Endothelial cell of umbilical vein (primary cell): ENCODE measurements at regions of chr12 and their contacts with region 1.

Region 1: GRCh38 chr12:12916135-12916944 is 25.0 kb downstream of the GPRC5A start:
- DNase-seq: peak; percentile 97
- H3K4me3 ChIP-seq: peak overlapping the region in 1 of 3 experiments; percentile 15
- H3K27ac ChIP-seq: peak overlapping the region; percentile 88
- H3K4me1 ChIP-seq: peaks cover 36% of the 10 kb centered on the region
- H3K27me3 ChIP-seq: no peaks in the 10 kb centered on the region
- CTCF ChIP-seq: peak; percentile 96 to 97
- POLR2A ChIP-seq: peak; percentile 21

Region 2: GRCh38 chr12:12724661-12725545 is 191.4 kb before region 1 on chr12:
- CTCF ChIA-PET with region 1: no interaction called
- POLR2A ChIA-PET with region 1: no interaction called
- dilution Hi-C with region 1: no loop called
- intact Hi-C with region 1: loop called (anchors 5 kb)
- DNase-seq: peak; percentile 98
- H3K4me3 ChIP-seq: peak overlapping the region; percentile 13 to 97 (median 95)
- H3K27ac ChIP-seq: peak overlapping the region; percentile 98
- H3K4me1 ChIP-seq: peaks cover 38% of the 10 kb centered on the region
- H3K27me3 ChIP-seq: no peaks in the 10 kb centered on the region
- CTCF ChIP-seq: no peak
- POLR2A ChIP-seq: peak; percentile 75

Region 3: GRCh38 chr12:12872139-12872881 is 44.0 kb before region 1 on chr12:
- CTCF ChIA-PET with region 1: interaction called, 6 read pairs
- POLR2A ChIA-PET with region 1: no interaction called
- dilution Hi-C with region 1: no loop called
- intact Hi-C with region 1: loop called (anchors 1 kb)
- DNase-seq: peak; percentile 93
- H3K4me3 ChIP-seq: peak overlapping the region in 1 of 3 experiments; percentile 43
- H3K27ac ChIP-seq: peak overlapping the region; percentile 96
- H3K4me1 ChIP-seq: peaks cover 41% of the 10 kb centered on the region
- H3K27me3 ChIP-seq: no peaks in the 10 kb centered on the region
- CTCF ChIP-seq: no peak
- POLR2A ChIP-seq: peak; percentile 74

Region 4: DNA sequence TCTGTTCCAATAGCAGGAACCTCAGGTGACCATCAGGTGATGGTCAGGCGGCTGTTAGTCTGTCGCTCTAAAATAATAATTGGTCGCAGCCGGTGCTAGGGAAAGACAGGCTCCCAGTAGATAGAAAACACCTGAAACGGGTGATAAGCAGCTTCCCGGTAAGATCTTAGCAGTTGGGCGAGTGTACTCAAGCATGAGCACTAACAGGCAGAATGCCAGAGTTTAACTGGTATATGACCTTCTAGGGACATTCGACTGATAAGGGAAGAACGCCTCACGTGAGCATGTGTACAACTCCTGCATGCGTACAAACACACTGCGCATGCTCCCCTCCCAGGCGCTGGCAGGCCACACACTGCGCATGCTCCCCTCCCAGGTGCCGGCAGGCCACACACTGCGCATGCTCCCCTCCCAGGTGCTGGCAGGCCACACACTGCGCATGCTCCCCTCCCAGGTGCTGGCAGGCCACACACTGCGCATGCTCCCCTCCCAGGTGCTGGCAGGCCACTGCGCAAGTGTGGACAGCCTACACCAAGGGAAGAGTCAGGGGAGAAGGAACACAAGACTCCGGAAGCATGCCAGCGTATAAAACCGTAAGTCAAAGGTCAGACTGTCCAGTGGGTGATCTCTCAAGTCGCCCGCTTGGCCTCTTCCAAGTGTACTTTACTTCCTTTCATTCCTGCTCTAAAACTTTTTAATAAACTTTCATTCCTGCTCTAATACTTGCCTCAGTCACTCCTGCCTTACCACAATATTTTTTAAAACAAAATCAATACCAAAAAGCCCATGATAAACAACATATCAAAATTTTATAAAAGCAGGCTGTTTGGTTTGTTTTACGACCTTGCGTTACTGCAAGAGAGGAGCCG is 11.1 kb after region 1 on chr12:
- CTCF ChIA-PET with region 1: no interaction called
- POLR2A ChIA-PET with region 1: no interaction called
- dilution Hi-C with region 1: no loop called
- intact Hi-C with region 1: no loop called
- DNase-seq: peak; percentile 97
- H3K4me3 ChIP-seq: peak overlapping the region; percentile 49 to 81 (median 51)
- H3K27ac ChIP-seq: peak overlapping the region; percentile 61
- H3K4me1 ChIP-seq: peaks cover 5% of the 10 kb centered on the region
- H3K27me3 ChIP-seq: no peaks in the 10 kb centered on the region
- CTCF ChIP-seq: no peak
- POLR2A ChIP-seq: peak; percentile 78

Region 5: GRCh38 chr12:12975322-12976077 is 59.2 kb after region 1 on chr12:
- CTCF ChIA-PET with region 1: interaction called, 116 read pairs
- POLR2A ChIA-PET with region 1: interaction called, 3 read pairs
- dilution Hi-C with region 1: no loop called
- intact Hi-C with region 1: loop called (anchors 1 kb)
- DNase-seq: peak; percentile 69
- H3K4me3 ChIP-seq: no peak overlapping the region
- H3K27ac ChIP-seq: peak overlapping the region; percentile 49
- H3K4me1 ChIP-seq: peaks cover 37% of the 10 kb centered on the region
- H3K27me3 ChIP-seq: no peaks in the 10 kb centered on the region
- CTCF ChIP-seq: peak; percentile 55 to 61
- POLR2A ChIP-seq: no peak

Region 6: DNA sequence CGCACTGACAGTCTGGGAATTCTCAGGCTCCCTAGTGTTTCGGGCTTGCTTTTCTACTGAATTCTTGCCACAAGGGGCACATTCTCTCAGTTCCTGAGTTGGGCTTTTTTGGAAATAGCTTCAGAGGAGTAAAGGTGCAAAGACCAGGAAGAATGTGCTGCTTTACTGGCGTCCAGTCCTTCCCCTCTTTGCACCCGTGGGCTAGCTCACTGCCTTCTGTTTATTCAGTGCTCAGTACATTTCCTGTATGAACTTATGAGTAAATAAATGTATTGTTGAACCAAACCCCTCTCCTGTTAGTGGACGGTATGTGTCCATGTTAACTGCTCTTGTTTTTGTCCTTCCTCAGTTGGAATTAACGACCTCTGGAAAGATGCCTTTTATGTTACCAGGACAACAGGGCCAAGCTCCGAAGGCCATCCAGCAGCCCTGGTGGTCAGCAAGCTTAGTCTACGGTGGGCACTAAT is 163.1 kb after region 1 on chr12:
- CTCF ChIA-PET with region 1: interaction called, 7 read pairs
- POLR2A ChIA-PET with region 1: no interaction called
- dilution Hi-C with region 1: no loop called
- intact Hi-C with region 1: loop called (anchors 1 kb)
- DNase-seq: peak; percentile 98
- H3K4me3 ChIP-seq: no peak overlapping the region
- H3K27ac ChIP-seq: peak overlapping the region; percentile 69
- H3K4me1 ChIP-seq: peaks cover 12% of the 10 kb centered on the region
- H3K27me3 ChIP-seq: no peaks in the 10 kb centered on the region
- CTCF ChIP-seq: peak; percentile 64 to 76
- POLR2A ChIP-seq: no peak

Region 7: GRCh38 chr12:13203034-13203922 is 286.9 kb after region 1 on chr12:
- CTCF ChIA-PET with region 1: interaction called, 60 read pairs
- POLR2A ChIA-PET with region 1: no interaction called
- dilution Hi-C with region 1: no loop called
- intact Hi-C with region 1: loop called (anchors 1 kb)
- DNase-seq: peak; percentile 46
- H3K4me3 ChIP-seq: no peak overlapping the region
- H3K27ac ChIP-seq: peak overlapping the region; percentile 97
- H3K4me1 ChIP-seq: peaks cover 90% of the 10 kb centered on the region
- H3K27me3 ChIP-seq: no peaks in the 10 kb centered on the region
- CTCF ChIP-seq: peak; percentile 28 to 46
- POLR2A ChIP-seq: no peak

Region 8: GRCh38 chr12:13362260-13362841 is 446.0 kb after region 1 on chr12:
- CTCF ChIA-PET with region 1: no interaction called
- POLR2A ChIA-PET with region 1: no interaction called
- dilution Hi-C with region 1: no loop called
- intact Hi-C with region 1: loop called (anchors 1 kb)
- DNase-seq: peak; percentile 48
- H3K4me3 ChIP-seq: no peak overlapping the region
- H3K27ac ChIP-seq: no peak overlapping the region
- H3K4me1 ChIP-seq: no peaks in the 10 kb centered on the region
- H3K27me3 ChIP-seq: peaks cover 3 to 13% of the 10 kb centered on the region in 2 experiments
- CTCF ChIP-seq: peak; percentile 86
- POLR2A ChIP-seq: no peak